Left cardiac atrium (tissue), 4 donors: ENCODE measurements at regions of chr1 and their contacts with region 1.

Region 1: GRCh38 chr1:8423650-8424538 is 106.0 kb downstream of the SLC45A1 start:
- DNase-seq: peak; percentile 60
- ATAC-seq: peak; percentile 58 to 79

Region 2: DNA sequence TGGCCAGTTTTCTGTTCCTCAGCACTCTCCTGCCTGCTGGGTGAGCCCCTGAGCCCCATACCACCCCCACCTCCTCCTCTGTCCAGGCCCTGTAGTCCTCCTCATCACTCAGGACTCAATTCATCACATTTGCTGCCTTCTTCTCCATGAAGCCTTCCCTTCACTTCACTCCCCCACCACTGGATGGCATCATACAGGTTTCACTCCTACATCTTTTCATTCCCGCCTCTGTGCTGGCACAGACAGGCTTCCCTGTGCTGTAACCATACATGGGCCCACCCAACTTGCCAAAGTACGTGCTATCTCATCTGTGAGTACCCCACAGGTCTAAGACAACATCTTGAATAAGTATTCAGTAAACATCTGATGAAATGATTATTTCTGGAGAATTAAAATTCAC is 49.1 kb before region 1 on chr1:
- intact Hi-C with region 1: loop called in 1 of 2 experiments (anchors 5 kb)
- DNase-seq: no peak
- ATAC-seq: no peak

Region 3: DNA sequence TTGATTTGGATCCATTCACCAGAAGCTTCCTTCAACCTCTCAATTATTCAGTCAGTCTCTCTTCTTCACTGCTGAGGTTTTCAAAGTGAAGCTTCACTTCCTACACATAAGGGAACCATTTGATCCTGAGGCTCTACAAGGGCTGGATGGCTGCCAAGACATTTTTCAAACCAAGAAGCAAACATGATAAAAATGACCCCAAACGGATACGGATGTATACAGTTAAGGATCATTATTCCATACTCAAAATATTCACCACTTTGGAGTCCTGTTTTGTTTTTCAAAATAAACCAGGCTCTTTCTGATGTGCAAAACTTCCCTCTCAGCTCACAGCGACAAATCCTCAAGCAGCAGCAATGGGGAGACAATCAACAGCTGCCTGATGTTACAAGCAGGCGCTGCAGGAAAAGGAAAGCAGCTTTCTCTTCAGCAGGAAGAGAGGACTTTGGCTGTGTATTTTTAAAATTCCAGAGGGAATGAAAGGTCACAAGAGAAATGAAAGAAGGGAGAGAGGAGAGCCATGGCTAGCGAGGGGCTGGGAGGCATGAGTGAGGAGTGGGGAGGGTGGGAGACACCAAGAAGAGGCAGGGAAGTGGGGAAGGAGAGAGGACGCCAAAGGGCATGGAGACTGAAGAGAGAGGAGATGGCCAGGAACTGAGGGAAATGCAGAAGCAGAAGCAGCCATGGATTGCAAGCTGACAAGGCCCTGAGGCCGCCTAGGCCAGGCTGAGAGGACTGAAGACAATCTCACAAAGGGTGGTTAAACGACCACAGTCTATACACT is 39.4 kb after region 1 on chr1:
- intact Hi-C with region 1: loop called in 1 of 2 experiments (anchors 5 kb)
- DNase-seq: peak; percentile 43
- ATAC-seq: peak; percentile 66

Region 4: DNA sequence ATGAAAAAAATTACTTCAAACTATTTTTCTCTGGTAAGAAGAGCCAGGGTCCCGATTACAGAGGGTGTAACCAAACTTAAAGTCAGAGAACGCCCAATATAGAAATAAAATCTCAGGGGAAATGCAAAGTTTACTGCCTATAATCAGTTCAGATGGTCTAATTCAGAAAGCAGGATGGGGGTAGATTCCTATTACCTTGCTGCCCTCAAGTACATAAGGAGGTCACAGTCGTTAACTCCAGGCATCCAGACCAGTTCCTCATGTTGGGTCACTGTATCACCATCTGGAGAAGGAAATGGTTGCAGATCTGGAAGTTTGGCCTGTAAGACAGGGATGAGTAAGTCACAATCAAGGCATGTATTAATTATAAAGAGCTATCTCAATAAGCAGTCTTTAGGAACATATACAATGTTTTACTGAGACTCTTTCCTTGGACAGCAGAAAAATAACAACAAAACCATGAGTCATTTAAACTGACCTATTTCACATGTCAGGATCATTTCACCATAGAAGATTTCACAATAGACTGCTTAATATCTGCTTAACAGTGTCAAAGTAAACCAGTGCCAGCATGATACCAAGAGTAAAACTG is 73.4 kb after region 1 on chr1:
- intact Hi-C with region 1: loop called in 1 of 2 experiments (anchors 10 kb)
- DNase-seq: no peak
- ATAC-seq: peak; percentile 72 to 78

Region 5: DNA sequence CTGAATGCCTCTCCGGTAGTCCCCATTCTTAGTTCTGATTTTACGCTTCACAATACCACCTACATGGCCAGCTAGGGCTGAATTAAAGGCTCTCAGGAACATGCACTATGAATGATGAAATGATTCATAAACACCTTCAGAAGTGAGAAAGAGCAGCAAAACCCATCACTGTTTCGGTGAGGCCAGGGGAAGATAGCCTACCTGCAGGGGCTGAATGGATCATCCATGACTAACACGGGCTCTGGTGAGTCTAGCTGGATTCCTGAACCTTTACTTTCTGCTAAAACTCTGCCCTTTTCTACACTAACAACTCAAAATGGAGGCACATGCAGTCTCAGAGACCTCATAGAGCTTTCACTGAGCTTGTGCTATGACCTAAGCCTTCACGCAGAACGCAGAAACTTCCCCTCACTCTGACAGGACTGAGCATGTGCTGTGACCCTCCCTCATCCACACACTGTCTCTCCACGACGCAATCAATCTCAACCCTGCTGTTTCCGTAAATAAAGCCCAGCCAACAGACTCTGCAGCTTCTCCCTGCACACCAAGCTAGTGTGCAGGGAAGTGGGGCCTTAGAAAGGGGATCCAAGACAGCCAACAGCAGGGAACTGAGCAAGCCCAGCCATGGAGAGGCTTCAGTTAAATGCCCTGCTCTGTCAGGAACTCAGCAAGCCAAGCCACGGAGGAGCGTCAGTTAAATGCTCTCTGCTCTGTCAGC is 101.8 kb after region 1 on chr1:
- intact Hi-C with region 1: loop called (anchors 10 kb)
- DNase-seq: peak; percentile 86
- ATAC-seq: peak; percentile 99 to 100